ENCODE measurements at regions of chr5 and their contacts with region 1.

Region 1: GRCh38 chr5:134527146-134527960 is 1.9 kb downstream of the JADE2 start:
- DNase-seq: peak; percentile 93
- ATAC-seq: peak; percentile 67

Region 2: GRCh38 chr5:134411546-134412266 is 115.6 kb before region 1 on chr5 and contains the start of gene CDKN2AIPNL:
- intact Hi-C with region 1: loop called (anchors 1 kb)
- DNase-seq: peak; percentile 96
- ATAC-seq: peak; percentile 100
- total RNA-seq, gene CDKN2AIPNL: 45.7 TPM

Region 3: GRCh38 chr5:134465816-134466240 is 61.5 kb before region 1 on chr5:
- intact Hi-C with region 1: loop called (anchors 1 kb)
- DNase-seq: peak; percentile 95
- ATAC-seq: peak; percentile 88

Region 4: DNA sequence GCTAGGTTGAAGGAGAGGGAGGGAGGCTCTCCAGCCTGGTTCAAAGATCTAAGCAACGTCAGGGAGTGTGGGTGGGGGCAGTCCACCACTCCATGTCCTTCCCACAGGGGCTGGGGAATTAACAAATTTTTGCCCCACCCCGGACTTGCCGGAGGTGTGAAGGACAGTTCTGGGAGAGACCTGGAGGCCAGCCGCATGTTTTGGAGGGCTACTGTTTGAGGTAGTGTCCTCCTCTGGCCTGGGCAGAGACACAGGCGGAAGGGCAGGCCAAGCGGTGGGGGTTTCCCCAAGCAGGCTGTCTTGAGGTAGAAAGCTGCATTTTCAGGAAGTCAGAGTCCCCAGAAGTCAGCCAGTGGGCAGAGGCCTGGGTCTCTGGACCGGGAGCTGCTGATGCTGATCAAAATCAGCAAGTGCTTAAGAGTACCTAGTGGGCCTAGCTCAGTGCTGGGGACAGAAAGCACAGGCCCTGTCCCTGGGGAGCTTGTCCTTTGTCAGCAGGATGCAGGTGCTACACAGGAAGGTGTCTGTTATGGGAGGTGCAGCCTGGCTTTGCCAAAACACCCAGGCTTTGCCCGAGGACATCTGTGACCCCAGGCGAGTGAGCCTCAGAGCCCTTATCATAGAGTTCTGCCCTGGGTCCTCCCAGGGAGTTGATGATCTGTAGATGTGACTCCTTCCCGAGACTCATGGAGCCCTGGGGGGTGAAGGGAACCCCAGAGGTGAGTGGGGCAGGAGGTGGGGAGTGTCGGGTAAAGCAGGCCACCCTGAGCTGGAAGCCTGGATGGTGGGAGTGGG is 16.7 kb after region 1 on chr5:
- intact Hi-C with region 1: loop called (anchors 2 kb)
- DNase-seq: no peak
- ATAC-seq: no peak

Region 5: GRCh38 chr5:134568761-134569695 is 41.7 kb after region 1 on chr5:
- intact Hi-C with region 1: loop called (anchors 2 kb)
- DNase-seq: peak; percentile 90
- ATAC-seq: peak; percentile 78

Region 6: DNA sequence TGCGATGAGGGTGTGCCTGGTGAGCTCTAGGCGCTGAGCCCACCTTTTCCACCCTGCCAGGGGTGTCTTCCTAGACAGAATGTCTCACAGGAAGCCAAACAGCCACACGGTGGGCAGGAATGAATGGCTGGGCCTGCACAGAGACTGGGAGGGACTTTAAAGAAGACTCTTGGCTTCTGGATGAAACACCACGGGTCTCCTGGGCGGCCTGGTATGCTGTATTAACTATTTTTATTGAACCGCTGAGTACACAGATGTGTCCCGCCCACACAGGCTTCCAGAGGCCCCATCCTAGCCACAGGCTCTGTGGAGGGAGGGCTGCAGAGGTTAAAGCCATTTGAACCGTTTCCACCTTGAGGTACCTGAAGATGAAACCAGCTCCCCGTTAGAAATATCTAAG is 1166.7 kb after region 1 on chr5:
- intact Hi-C with region 1: no loop called
- DNase-seq: no peak
- ATAC-seq: no peak

Measured in Right ventricle myocardium inferior (tissue), 1 donor.